ENCODE measurements at regions of chr3 and their contacts with region 1.

Region 1: DNA sequence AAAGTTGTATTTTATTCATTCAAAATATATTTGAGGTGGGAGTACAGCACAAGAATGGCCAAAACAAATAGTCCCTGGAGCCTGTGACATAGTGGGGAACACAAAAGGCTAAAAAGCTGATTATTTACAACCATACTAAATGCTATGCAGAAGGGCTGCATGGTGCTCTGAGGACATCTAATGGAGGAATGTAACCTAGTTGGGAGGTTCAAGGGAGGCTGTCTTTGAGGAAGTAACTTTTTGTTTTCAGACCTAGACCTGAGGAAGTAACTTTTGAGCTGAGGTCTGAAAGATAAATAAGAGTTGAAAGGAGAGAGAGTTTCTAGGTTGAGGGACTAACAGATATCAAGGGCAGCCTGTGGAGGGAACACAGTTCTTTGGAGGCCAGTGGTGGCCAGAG is 34.8 kb upstream of the RASA2 start:
- DNase-seq: peak; percentile 57 to 64 (median 62)
- H3K4me3 ChIP-seq: no peak overlapping the region
- H3K4me3 Mint-ChIP-seq: no peak overlapping the region
- H3K27ac ChIP-seq: no peak overlapping the region
- H3K27ac Mint-ChIP-seq: no peak overlapping the region
- H3K4me1 ChIP-seq: peaks cover 18% of the 10 kb centered on the region
- H3K4me1 Mint-ChIP-seq: peaks cover 7 to 14% (median 10%) of the 10 kb centered on the region in 4 donors
- H3K27me3 ChIP-seq: no peaks in the 10 kb centered on the region
- H3K27me3 Mint-ChIP-seq: no peaks in the 10 kb centered on the region

Region 2: DNA sequence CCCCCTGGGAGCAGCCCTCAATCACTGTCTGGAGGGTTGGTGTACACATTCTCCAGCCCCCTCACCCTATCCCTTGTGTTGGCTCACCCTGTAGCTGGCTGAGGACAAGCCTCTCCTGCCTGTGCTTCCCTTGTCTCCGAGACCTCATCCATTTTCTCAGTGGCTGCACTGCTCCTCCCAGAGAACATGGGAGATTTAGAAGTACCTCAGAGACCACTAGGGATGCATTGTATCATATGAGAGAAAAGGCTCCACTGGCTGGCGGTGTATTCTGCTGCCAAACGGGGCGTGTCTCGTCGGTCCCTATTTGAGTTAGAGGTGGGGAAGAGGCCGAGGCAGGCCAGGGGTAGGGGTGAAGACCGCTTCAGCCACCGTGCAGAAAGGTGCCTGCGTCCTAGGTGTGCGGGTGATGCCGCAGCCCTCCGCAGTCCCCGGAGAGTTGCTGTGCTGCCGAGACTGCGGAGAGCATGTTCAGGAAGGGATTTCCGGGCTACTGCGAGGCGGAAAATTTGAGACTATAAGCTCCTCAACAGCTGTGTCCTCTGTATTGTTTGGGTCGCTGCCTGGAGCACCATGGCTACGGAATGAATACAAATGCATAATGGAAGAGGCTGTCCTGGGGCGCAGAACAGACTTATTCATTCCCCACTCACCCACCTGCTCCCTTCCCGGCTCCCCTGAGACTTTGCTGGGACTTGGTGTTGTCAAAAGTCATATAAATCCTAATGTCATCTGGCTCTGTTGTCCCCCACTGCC is 357.1 kb before region 1 on chr3:
- CTCF ChIA-PET with region 1: no interaction called
- POLR2A ChIA-PET with region 1: no interaction called
- intact Hi-C with region 1: no loop called
- DNase-seq: no peak
- H3K4me3 ChIP-seq: no peak overlapping the region
- H3K4me3 Mint-ChIP-seq: no peak overlapping the region
- H3K27ac ChIP-seq: no peak overlapping the region
- H3K27ac Mint-ChIP-seq: no peak overlapping the region
- H3K4me1 ChIP-seq: no peaks in the 10 kb centered on the region
- H3K4me1 Mint-ChIP-seq: no peaks in the 10 kb centered on the region
- H3K27me3 ChIP-seq: no peaks in the 10 kb centered on the region
- H3K27me3 Mint-ChIP-seq: peaks cover 0 to 2% of the 10 kb centered on the region in 2 donors

Region 3: GRCh38 chr3:141151439-141151838 is 300.6 kb before region 1 on chr3:
- CTCF ChIA-PET with region 1: no interaction called
- POLR2A ChIA-PET with region 1: no interaction called
- intact Hi-C with region 1: no loop called
- DNase-seq: no peak
- H3K4me3 ChIP-seq: no peak overlapping the region
- H3K4me3 Mint-ChIP-seq: no peak overlapping the region
- H3K27ac ChIP-seq: no peak overlapping the region
- H3K27ac Mint-ChIP-seq: no peak overlapping the region
- H3K4me1 ChIP-seq: no peaks in the 10 kb centered on the region
- H3K4me1 Mint-ChIP-seq: no peaks in the 10 kb centered on the region
- H3K27me3 ChIP-seq: no peaks in the 10 kb centered on the region
- H3K27me3 Mint-ChIP-seq: peaks cover 14 to 18% of the 10 kb centered on the region in 2 donors

Region 4: GRCh38 chr3:141331377-141332318 is 120.4 kb before region 1 on chr3:
- CTCF ChIA-PET with region 1: no interaction called
- POLR2A ChIA-PET with region 1: no interaction called
- intact Hi-C with region 1: no loop called
- DNase-seq: no peak
- H3K4me3 ChIP-seq: no peak overlapping the region
- H3K4me3 Mint-ChIP-seq: no peak overlapping the region
- H3K27ac ChIP-seq: no peak overlapping the region
- H3K27ac Mint-ChIP-seq: peak overlapping the region in 2 of 7 donors; percentile 16 to 20
- H3K4me1 ChIP-seq: no peaks in the 10 kb centered on the region
- H3K4me1 Mint-ChIP-seq: no peaks in the 10 kb centered on the region
- H3K27me3 ChIP-seq: no peaks in the 10 kb centered on the region
- H3K27me3 Mint-ChIP-seq: peaks cover 7 to 13% of the 10 kb centered on the region in 2 donors

Region 5: GRCh38 chr3:141370065-141370533 is 81.9 kb before region 1 on chr3:
- CTCF ChIA-PET with region 1: interaction called, 52 read pairs
- POLR2A ChIA-PET with region 1: interaction called, 3 read pairs
- intact Hi-C with region 1: loop called (anchors 1 kb)
- DNase-seq: peak; percentile 82 to 88 (median 84)
- H3K4me3 ChIP-seq: no peak overlapping the region
- H3K4me3 Mint-ChIP-seq: no peak overlapping the region
- H3K27ac ChIP-seq: no peak overlapping the region
- H3K27ac Mint-ChIP-seq: peak overlapping the region in 6 of 7 donors; percentile 30 to 90 (median 58)
- H3K4me1 ChIP-seq: no peaks in the 10 kb centered on the region
- H3K4me1 Mint-ChIP-seq: peaks cover 5 to 11% (median 8%) of the 10 kb centered on the region in 4 donors
- H3K27me3 ChIP-seq: no peaks in the 10 kb centered on the region
- H3K27me3 Mint-ChIP-seq: no peaks in the 10 kb centered on the region

Region 6: DNA sequence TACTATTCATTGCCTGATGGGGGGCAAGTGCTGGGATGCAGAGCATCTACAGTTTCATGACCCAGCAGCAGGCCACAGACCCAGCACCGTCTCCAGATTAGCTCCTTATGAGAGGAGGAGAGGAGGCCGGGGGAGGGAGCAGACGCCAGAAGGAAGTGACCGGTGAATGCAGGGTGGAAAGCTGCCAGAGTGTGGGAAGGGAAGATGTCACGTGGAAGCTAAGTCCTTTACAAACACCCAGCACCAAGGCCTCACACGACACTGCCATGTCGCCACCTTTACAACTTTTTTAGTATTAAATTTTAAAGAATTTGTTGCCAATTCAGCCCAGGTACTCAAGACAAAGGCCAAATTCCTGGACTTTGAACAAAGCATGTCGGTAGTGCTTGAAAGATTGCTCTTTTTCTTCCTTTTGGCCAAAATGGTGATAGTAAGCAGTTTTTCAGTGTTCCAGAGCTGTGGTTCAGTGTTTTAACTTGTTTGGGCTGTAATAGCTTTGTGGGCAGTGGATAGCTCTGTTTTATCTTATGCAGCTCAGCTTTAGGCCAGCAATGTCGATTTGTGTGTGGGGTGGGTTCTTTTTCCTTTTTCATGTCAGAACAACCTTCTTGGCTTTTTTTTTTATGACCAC is 25.5 kb before region 1 on chr3:
- CTCF ChIA-PET with region 1: interaction called, 10 read pairs
- POLR2A ChIA-PET with region 1: no interaction called
- intact Hi-C with region 1: no loop called
- DNase-seq: no peak
- H3K4me3 ChIP-seq: no peak overlapping the region
- H3K4me3 Mint-ChIP-seq: no peak overlapping the region
- H3K27ac ChIP-seq: no peak overlapping the region
- H3K27ac Mint-ChIP-seq: peak overlapping the region in 6 of 7 donors; percentile 16 to 74 (median 50)
- H3K4me1 ChIP-seq: peaks cover 27% of the 10 kb centered on the region
- H3K4me1 Mint-ChIP-seq: peaks cover 8 to 48% (median 35%) of the 10 kb centered on the region in 4 donors
- H3K27me3 ChIP-seq: no peaks in the 10 kb centered on the region
- H3K27me3 Mint-ChIP-seq: no peaks in the 10 kb centered on the region

Region 7: DNA sequence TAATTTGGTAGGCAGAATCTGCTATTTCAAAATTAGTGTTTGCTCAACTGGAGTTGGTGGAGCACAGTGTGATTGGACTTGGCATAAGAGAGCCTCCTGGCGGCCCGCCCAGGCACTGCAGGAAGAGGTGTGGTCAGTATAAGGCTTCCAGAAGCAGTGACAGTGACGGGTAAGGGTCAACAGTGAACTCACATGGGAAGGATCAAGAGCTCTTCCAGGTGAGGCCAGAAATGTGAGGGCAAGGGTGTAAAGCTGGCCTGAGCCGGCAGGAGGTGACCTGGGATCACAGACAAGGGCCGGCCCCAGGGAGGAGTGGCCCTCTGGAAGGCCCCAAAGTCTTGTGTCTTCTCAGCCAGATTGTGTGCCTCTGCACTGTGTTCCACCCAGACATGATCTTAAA is 192.9 kb after region 1 on chr3:
- CTCF ChIA-PET with region 1: interaction called, 14 read pairs
- POLR2A ChIA-PET with region 1: no interaction called
- intact Hi-C with region 1: no loop called
- DNase-seq: peak; percentile 49 to 58 (median 56)
- H3K4me3 ChIP-seq: no peak overlapping the region
- H3K4me3 Mint-ChIP-seq: peak overlapping the region in 1 of 8 donors; percentile 1
- H3K27ac ChIP-seq: no peak overlapping the region
- H3K27ac Mint-ChIP-seq: peak overlapping the region in 2 of 7 donors; percentile 23 to 61
- H3K4me1 ChIP-seq: no peaks in the 10 kb centered on the region
- H3K4me1 Mint-ChIP-seq: peaks cover 0 to 3% (median 1%) of the 10 kb centered on the region in 4 donors
- H3K27me3 ChIP-seq: no peaks in the 10 kb centered on the region
- H3K27me3 Mint-ChIP-seq: no peaks in the 10 kb centered on the region

Region 8: DNA sequence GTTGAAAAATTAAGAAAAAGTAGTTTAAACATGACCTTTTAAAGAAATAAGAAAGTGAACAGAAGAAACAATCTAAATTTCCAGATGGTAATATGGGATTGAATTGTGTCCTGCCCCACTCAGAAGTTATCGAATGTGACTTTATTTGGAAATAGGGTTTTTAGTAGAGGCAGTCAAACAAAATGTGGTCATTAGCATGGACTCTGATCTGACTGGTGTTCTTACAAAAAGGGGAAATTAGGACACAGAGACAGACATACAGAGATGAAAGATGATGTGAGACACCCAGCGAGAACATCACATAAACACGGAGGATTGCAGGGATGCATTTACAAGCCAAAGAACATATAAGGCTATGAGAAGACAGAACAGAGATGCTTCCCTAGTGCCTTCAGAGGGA is 922.7 kb after region 1 on chr3:
- CTCF ChIA-PET with region 1: no interaction called
- POLR2A ChIA-PET with region 1: no interaction called
- intact Hi-C with region 1: no loop called
- DNase-seq: no peak
- H3K4me3 ChIP-seq: no peak overlapping the region
- H3K4me3 Mint-ChIP-seq: no peak overlapping the region
- H3K27ac ChIP-seq: no peak overlapping the region
- H3K27ac Mint-ChIP-seq: peak overlapping the region in 3 of 7 donors; percentile 22 to 67 (median 31)
- H3K4me1 ChIP-seq: no peaks in the 10 kb centered on the region
- H3K4me1 Mint-ChIP-seq: peaks cover 0 to 5% (median 2%) of the 10 kb centered on the region in 4 donors
- H3K27me3 ChIP-seq: no peaks in the 10 kb centered on the region
- H3K27me3 Mint-ChIP-seq: no peaks in the 10 kb centered on the region

Measured in CD4-positive, alpha-beta memory T cell (primary cell).